ENCODE measurements at regions of chr1 and their contacts with region 1.

Region 1: DNA sequence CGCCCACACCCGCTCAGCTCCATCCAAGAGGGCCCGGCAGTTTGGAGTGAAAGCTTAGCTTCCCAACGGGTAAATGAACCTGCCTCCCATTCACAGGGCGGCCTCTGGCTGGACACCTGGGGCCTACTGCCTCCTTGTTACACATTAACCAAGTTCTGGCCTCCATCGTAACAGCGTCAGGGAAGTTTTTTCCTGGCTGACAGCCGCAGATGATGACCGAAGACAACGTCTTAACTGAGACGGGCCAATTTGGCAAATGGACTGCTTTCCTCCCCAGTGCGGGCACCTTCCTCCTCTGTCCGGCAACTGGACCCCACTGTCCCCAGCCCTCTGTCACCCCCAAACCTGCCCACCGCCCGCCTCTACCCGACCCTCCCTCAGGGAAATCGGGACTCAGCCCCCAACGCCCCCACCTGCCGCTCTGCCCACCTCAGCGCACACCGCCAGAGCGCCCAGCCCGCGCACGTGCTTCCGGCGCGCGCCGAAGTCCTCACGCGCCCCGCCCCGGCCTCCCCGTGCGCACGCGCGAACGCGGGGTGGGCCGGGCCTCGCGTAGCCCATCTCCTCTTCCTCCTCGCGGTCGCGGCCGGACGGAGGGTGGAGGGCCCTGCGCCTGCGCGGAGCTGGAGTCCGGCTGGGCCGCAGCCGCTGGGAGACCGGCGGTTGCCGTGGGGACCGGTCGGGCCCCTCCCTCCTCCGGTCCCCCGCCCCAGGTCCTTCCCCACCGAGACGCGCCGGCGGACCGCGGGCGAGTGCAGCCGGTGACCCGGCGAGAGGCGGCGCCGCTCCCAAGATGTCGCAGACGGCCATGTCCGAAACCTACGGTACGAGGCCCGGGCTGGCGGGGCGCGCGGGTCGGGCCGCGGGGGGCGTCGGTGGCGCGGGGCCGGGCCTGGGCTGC is at the start of gene RAB4A:
- DNase-seq: peak; percentile 90 to 94
- ATAC-seq: peak; percentile 94 to 96 (median 96)
- H3K4me3 ChIP-seq: peak within 1 kb of the TSS; percentile 79
- H3K27ac ChIP-seq: peak within 1 kb of the TSS; percentile 77
- H3K4me1 ChIP-seq: peaks cover 46% of the 10 kb centered on the region
- H3K27me3 ChIP-seq: no peaks in the 10 kb centered on the region
- CTCF ChIP-seq: no peak
- total RNA-seq, gene RAB4A: 44.2 to 67.4 (median 54.3) TPM

Region 2: DNA sequence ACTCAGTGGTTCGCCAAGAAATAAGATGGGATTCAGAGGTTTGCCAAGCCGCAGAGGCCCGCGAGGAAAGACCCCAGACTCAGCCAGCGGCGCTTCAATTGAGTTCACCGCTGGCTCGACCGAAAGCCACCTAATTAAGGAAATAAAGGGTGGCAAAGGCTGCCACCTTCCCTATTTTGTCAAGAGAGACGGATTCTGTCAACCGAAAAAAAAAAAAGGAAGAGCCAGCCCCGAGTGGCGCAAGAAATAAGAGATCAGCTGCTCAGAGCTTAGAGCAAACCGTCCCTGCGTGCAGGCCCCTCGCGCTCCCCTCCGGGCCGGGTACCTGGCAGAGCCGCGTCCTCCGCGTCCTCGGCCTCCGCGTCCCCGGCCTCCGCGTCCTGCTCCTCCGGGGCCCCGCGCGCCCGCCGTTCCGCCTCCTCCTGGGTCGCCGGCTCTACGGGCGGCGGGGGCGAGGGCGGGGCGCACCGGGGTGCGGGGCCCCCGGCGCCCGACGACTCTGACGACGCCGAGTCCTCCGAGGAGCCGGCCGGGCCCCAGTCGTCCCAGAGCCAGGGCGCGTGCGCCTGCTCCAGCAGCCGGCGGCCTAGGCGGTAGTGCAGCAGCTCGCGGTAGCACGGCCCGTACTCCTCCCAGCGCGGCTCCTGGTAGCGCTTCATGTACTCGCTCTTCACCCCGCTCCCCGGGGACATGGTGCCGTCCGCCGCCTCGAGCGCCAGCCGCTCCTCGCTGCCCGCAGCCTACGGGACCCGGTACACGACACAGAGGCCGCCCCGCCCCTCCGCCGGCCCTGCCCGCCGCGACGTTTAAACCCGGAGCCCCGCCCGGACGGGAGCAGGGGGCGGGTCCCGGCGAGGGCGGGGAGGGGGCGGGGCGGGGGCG is 71.2 kb after region 1 on chr1:
- intact Hi-C with region 1: loop called in 1 of 2 experiments (anchors 5 kb)
- DNase-seq: peak; percentile 84 to 92
- ATAC-seq: peak; percentile 96 to 98 (median 98)
- H3K4me3 ChIP-seq: peak overlapping the region; percentile 90
- H3K27ac ChIP-seq: peak overlapping the region; percentile 87
- H3K4me1 ChIP-seq: peaks cover 9% of the 10 kb centered on the region
- H3K27me3 ChIP-seq: no peaks in the 10 kb centered on the region
- CTCF ChIP-seq: no peak

Region 3: GRCh38 chr1:229447809-229448252 is 177.0 kb after region 1 on chr1:
- intact Hi-C with region 1: no loop called
- DNase-seq: no peak
- ATAC-seq: no peak
- H3K4me3 ChIP-seq: no peak overlapping the region
- H3K27ac ChIP-seq: no peak overlapping the region
- H3K4me1 ChIP-seq: no peaks in the 10 kb centered on the region
- H3K27me3 ChIP-seq: no peaks in the 10 kb centered on the region
- CTCF ChIP-seq: no peak

Measured in psoas muscle (tissue), 8 donors.